Psoas muscle (tissue), 8 donors: ENCODE measurements at regions of chr14 and their contacts with region 1.

Region 1: DNA sequence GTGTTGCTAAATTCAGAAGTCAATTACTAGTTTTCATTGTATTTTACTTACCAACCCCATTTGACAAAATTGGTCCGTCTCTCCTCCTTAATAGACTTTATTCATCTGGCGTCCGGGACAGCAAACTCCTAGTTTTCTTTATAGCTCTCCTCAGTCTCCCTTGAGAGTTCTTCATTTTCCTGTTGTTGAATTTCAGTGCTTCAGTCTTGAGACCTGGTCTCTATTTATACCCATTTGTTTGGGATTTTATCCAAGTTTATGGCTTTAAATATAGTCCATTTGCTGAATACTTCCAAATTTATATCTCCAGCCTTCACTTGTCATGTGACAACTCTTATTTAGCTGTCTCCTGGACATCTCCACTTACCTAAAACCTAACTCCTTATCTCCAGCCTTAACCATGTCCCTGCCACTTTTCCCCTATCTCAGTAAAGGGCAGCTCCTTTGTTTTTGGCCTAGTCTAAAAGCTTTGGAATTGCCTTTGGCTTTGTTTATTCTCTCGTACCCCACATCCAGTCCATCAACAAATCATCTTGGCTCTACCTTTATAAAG is 23.5 kb downstream of the KTN1 start:
- DNase-seq: no peak
- ATAC-seq: peak in 1 of 4 donors; percentile 25
- H3K4me3 ChIP-seq: peak overlapping the region; percentile 3
- H3K27ac ChIP-seq: peak overlapping the region; percentile 67
- H3K4me1 ChIP-seq: peaks cover 84% of the 10 kb centered on the region
- H3K27me3 ChIP-seq: no peaks in the 10 kb centered on the region
- CTCF ChIP-seq: no peak

Region 2: GRCh38 chr14:55585854-55586253 is 17.6 kb before region 1 on chr14:
- intact Hi-C with region 1: loop called in 1 of 2 experiments (anchors 2 kb)
- DNase-seq: no peak
- ATAC-seq: no peak
- H3K4me3 ChIP-seq: peak overlapping the region; percentile 37
- H3K27ac ChIP-seq: peak overlapping the region; percentile 99
- H3K4me1 ChIP-seq: peaks cover 91% of the 10 kb centered on the region
- H3K27me3 ChIP-seq: no peaks in the 10 kb centered on the region
- CTCF ChIP-seq: no peak